Activated CD8-positive, alpha-beta T cell treated with anti-CD3 and anti-CD28 coated beads, Interleukin-2, amount 10 ng/mL, durations not matched to agents 7 days and 5 days (primary cell): ENCODE measurements at regions of chr11 and their contacts with region 1.

Region 1: DNA sequence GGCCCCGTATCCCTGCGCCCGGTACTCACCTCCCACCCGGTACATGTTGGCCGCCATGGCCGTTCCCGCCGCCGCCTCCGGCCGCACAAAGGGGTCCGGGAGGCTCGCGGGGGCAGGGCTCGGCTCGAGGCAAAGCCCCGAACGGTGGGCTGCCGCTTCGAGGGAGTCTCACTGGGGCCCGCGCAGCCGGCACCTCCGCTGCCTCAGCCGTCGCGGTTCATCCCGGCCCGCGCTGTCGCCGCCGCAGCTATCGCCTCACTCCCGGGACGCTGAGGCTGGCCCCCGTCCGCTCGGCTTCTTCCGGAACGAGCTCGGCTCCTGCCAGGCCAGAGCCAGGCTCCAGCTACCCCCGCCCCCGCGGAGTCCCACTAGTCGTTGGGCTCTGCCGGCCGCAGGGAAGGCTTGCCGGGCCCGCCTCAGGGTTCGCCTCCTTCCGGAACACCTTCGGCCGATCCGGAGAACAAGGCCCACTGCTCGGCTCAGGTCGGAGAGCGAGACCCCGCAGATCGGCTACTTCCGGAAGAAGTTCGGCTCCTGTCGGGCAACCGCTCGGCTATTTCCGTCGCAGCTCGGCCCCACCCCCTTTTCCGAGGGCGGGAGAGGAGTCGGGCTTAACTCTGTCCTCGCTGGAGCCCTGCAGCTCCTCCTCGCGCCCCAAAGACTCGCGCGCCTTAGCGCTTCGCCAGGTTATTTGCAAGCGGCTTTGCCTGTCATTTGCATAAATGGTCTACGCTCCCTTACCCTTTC is at the start of gene MTA2:
- DNase-seq: peak; percentile 100
- ATAC-seq: peak; percentile 88
- H3K4me3 Mint-ChIP-seq: peak within 1 kb of the TSS; percentile 89
- H3K27ac Mint-ChIP-seq: peak within 1 kb of the TSS; percentile 88
- H3K4me1 Mint-ChIP-seq: peaks cover 52% of the 10 kb centered on the region
- H3K27me3 Mint-ChIP-seq: no peaks in the 10 kb centered on the region
- total RNA-seq, gene MTA2: 249 to 273 TPM

Region 2: GRCh38 chr11:62612366-62613290 is 11.1 kb after region 1 on chr11 and contains the starts of genes EML3 and ROM1:
- CTCF ChIA-PET with region 1: interaction called, 15 read pairs
- POLR2A ChIA-PET with region 1: interaction called, 24 read pairs
- DNase-seq: peak; percentile 92
- ATAC-seq: peak; percentile 78
- H3K4me3 Mint-ChIP-seq: peak within 1 kb of the TSS; percentile 88
- H3K27ac Mint-ChIP-seq: peak within 1 kb of the TSS; percentile 96
- H3K4me1 Mint-ChIP-seq: peaks cover 56% of the 10 kb centered on the region
- H3K27me3 Mint-ChIP-seq: no peaks in the 10 kb centered on the region
- total RNA-seq, gene EML3: 120 to 144 TPM
- total RNA-seq, gene ROM1: 1.3 to 2.0 TPM

Region 3: DNA sequence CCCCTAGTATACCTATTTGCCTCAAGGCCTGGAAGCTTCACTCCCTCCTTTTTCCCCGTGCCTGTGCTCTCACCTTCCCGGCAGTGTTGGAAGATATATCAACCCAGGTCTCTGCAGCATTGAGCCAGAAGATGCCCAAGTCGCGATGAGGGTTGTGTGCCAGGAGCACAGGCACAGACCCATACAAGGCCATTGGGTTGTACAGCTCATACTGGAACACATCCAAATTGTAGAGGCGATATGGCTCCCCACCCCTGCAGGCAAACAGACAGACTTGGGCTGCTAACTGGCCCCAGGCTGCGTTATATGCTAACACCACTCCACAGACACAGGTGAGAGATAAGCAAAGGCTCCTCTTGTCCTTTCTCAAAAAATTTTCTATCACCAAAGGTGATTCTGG is 30.9 kb after region 1 on chr11:
- CTCF ChIA-PET with region 1: no interaction called
- POLR2A ChIA-PET with region 1: no interaction called
- DNase-seq: no peak
- ATAC-seq: no peak
- H3K4me3 Mint-ChIP-seq: no peak overlapping the region
- H3K27ac Mint-ChIP-seq: peak overlapping the region; percentile 13
- H3K4me1 Mint-ChIP-seq: peaks cover 19% of the 10 kb centered on the region
- H3K27me3 Mint-ChIP-seq: no peaks in the 10 kb centered on the region